HepG2 (cell line): ENCODE measurements at regions of chr5 and their contacts with region 1.

Region 1: DNA sequence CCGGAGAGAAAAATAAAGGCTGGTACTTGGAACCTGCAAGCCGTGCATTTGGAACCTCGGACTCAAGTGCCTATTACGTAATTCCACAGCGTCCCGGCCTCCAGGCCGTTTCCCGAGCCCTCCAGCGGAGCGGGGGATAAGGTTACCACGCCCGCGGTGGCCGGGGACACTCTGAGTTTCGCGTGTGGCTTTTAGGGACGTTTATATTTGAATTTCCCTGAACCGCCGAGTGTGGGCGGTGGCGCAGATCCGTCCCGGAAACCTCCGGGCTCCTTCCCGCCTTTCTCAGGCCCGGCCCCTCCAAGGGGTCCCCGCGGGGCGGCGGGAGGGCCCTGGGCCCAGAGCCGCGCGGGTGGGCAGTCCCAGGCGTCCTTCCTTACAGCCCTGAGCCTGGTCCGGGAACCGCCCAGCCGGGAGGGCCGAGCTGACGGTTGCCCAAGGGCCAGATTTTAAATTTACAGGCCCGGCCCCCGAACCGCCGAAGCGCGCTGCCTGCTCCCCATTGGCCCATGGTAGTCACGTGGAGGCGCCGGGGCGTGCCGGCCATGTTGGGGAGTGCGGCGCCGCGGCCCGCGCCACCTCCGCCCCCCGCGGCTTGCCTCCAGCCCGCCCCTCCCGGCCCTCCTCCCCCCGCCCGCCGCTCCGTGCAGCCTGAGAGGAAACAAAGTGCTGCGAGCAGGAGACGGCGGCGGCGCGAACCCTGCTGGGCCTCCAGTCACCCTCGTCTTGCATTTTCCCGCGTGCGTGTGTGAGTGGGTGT is at the start of gene LMNB1:
- DNase-seq: peak; percentile 92
- ATAC-seq: peak; percentile 85
- H3K4me3 ChIP-seq: peak within 1 kb of the TSS; percentile 88 to 97 (median 91)
- H3K27ac ChIP-seq: peak within 1 kb of the TSS; percentile 95
- H3K4me1 ChIP-seq: peaks cover 32% of the 10 kb centered on the region
- H3K27me3 ChIP-seq: no peaks in the 10 kb centered on the region; a peak in 1 of 5 replicates
- CTCF ChIP-seq: peak; percentile 15; the same call in 1 of the 2 replicates
- EP300 ChIP-seq: peak; percentile 7 to 29; a peak in 1 of 4 replicates
- POLR2A ChIP-seq: peak; percentile 60 to 78
- RAD21 ChIP-seq: peak; percentile 36
- total RNA-seq, gene LMNB1: 159 and 197 TPM in 2 replicates

Region 2: DNA sequence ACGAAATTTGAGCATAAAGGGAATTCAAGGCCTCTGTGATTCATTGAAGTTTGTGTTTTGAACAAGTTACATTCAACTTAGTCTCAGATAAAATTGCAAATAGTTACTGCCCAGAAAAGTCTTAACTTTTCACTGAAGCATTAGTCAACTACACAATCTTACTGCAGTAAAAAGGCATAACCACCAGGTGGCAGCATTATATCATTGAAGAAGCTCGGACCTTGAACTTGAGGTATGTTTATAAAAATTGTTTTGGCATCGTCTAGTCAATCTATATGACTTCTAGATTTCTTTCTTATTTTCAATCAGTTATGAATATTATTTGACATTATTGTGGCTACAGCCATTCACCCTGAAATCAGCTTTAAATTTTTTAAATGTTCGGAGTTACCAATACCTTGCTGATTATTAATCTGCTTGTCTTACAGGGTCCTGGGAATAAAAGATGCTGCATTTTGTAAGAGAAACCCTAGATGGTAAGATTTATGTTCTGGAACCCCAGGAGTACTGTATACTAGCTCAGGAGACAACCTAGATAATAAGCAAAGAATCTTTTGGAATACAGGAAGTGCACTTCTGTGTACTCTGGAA is 437.4 kb before region 1 on chr5:
- CTCF ChIA-PET with region 1: no interaction called
- POLR2A ChIA-PET with region 1: no interaction called
- in situ Hi-C with region 1: loop called (anchors 25 kb)
- intact Hi-C with region 1: no loop called
- DNase-seq: peak; percentile 61
- ATAC-seq: peak; percentile 36; the same call in 1 of the 3 replicates
- H3K4me3 ChIP-seq: no peak overlapping the region
- H3K27ac ChIP-seq: no peak overlapping the region
- H3K4me1 ChIP-seq: no peaks in the 10 kb centered on the region
- H3K27me3 ChIP-seq: no peaks in the 10 kb centered on the region
- CTCF ChIP-seq: peak; percentile 77
- EP300 ChIP-seq: no peak
- POLR2A ChIP-seq: no peak
- RAD21 ChIP-seq: peak; percentile 69; the same call in 1 of the 2 replicates

Region 3: DNA sequence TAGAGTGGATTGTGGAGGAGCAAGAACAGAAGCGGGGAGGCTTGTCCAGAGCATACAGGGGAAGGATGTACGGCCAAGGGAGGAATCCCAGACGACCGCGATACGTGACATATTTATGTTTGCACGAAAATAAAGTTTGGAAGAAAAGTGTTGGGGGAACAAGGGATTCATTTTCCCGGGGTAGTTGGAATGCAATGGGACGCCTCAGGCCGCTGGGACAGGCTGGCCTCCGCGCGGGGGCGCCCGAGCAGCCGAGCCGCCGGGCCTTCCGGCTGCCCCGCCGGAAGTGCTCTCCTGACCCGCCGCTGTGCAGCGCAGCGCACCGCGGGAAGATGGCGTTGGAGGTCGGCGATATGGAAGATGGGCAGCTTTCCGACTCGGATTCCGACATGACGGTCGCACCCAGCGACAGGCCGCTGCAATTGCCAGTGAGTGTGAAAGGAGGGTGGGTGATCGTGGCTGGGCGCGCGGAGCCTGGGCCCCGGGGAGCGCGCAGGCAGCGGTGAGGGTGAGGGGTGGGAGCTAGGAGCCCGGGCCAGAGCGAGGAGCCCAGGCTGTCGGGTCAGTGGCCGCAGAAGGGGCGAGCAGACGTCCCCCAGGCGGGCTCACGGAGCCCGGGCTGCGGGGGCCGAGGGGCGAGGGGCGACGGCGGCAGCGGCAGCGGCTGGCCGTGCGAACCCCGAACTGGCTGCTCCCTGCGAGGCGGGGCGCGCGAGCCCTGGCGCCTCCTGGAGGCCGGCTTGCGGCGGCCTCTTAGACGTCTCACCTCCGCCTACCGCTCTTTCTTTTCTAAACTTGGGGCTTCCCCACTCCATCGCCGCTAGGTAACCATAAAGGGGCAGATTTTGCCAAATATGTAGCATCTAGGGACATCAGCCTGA is 175.8 kb before region 1 on chr5 and contains the start of gene PHAX:
- CTCF ChIA-PET with region 1: no interaction called
- POLR2A ChIA-PET with region 1: interaction called, 12 read pairs
- in situ Hi-C with region 1: no loop called
- intact Hi-C with region 1: loop called (anchors 5 kb)
- DNase-seq: peak; percentile 60
- ATAC-seq: peak; percentile 98
- H3K4me3 ChIP-seq: peak within 1 kb of the TSS; percentile 85 to 96 (median 91)
- H3K27ac ChIP-seq: peak within 1 kb of the TSS; percentile 66
- H3K4me1 ChIP-seq: peaks cover 50% of the 10 kb centered on the region
- H3K27me3 ChIP-seq: no peaks in the 10 kb centered on the region; a peak in 1 of 5 replicates
- CTCF ChIP-seq: peak; percentile 84
- EP300 ChIP-seq: no peak
- POLR2A ChIP-seq: peak; percentile 74 to 88
- RAD21 ChIP-seq: peak; percentile 19; the same call in 1 of the 2 replicates
- total RNA-seq, gene PHAX: 59.7 and 95.0 TPM in 2 replicates

Region 4: GRCh38 chr5:126656396-126657007 is 120.2 kb before region 1 on chr5:
- CTCF ChIA-PET with region 1: interaction called, 10 read pairs
- POLR2A ChIA-PET with region 1: interaction called, 5 read pairs
- in situ Hi-C with region 1: no loop called
- intact Hi-C with region 1: loop called (anchors 1 kb)
- DNase-seq: peak; percentile 41
- ATAC-seq: no peak
- H3K4me3 ChIP-seq: no peak overlapping the region
- H3K27ac ChIP-seq: no peak overlapping the region
- H3K4me1 ChIP-seq: peaks cover 43% of the 10 kb centered on the region
- H3K27me3 ChIP-seq: no peaks in the 10 kb centered on the region
- CTCF ChIP-seq: peak; percentile 77
- EP300 ChIP-seq: no peak
- POLR2A ChIP-seq: no peak
- RAD21 ChIP-seq: peak; percentile 51

Region 5: DNA sequence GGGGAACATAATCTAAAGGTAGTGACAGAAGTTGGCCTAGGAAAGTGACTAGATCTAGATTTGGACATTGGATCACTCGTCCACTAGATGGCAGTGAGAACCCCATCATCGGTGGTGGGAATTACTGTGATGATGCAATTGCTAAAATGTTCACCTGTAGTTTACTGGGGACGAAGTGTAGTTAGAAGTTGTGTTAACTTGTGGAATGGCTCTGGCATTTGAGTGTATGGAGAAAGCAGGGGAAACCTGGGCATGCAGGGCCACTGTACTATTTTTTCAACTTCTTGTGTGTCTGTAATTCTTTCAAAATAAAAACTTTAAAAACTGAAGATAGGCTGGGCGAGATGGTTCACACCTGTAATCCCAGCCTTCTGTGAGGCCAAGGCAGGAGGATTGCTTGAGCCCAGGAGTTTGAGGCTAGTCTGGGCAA is 100.5 kb before region 1 on chr5:
- CTCF ChIA-PET with region 1: interaction called, 21 read pairs
- POLR2A ChIA-PET with region 1: interaction called, 3 read pairs
- in situ Hi-C with region 1: loop called (anchors 5 kb)
- intact Hi-C with region 1: loop called (anchors 1 kb)
- DNase-seq: peak; percentile 66
- ATAC-seq: peak; percentile 74
- H3K4me3 ChIP-seq: no peak overlapping the region
- H3K27ac ChIP-seq: no peak overlapping the region
- H3K4me1 ChIP-seq: peaks cover 29% of the 10 kb centered on the region
- H3K27me3 ChIP-seq: peaks cover 0 to 3% of the 10 kb centered on the region in 2 experiments; a peak in 2 of 5 replicates
- CTCF ChIP-seq: peak; percentile 92
- EP300 ChIP-seq: no peak
- POLR2A ChIP-seq: no peak
- RAD21 ChIP-seq: peak; percentile 82

Region 6: GRCh38 chr5:128264564-128265360 is 1488.1 kb after region 1 on chr5:
- CTCF ChIA-PET with region 1: no interaction called
- POLR2A ChIA-PET with region 1: no interaction called
- in situ Hi-C with region 1: no loop called
- intact Hi-C with region 1: no loop called
- DNase-seq: no peak
- ATAC-seq: no peak
- H3K4me3 ChIP-seq: no peak overlapping the region
- H3K27ac ChIP-seq: no peak overlapping the region
- H3K4me1 ChIP-seq: no peaks in the 10 kb centered on the region
- H3K27me3 ChIP-seq: no peaks in the 10 kb centered on the region
- CTCF ChIP-seq: no peak
- EP300 ChIP-seq: no peak
- POLR2A ChIP-seq: no peak
- RAD21 ChIP-seq: no peak